WTC11 (cell line): ENCODE measurements at regions of chr5 and their contacts with region 1.

Region 1: GRCh38 chr5:173984218-173984617 is 4.8 kb upstream of the C5orf47 start:
- DNase-seq: no peak
- ATAC-seq: peak; percentile 82
- H3K4me3 Mint-ChIP-seq: no peak overlapping the region
- H3K27ac Mint-ChIP-seq: no peak overlapping the region
- H3K4me1 Mint-ChIP-seq: peaks cover 16% of the 10 kb centered on the region
- H3K27me3 Mint-ChIP-seq: no peaks in the 10 kb centered on the region
- CTCF ChIP-seq: peak; percentile 40; the same call in 1 of the 2 replicates

Region 2: GRCh38 chr5:173592050-173592669 is 392.1 kb before region 1 on chr5:
- CTCF ChIA-PET with region 1: interaction called, 15 read pairs
- POLR2A ChIA-PET with region 1: no interaction called
- DNase-seq: no peak
- ATAC-seq: no peak
- H3K4me3 Mint-ChIP-seq: no peak overlapping the region
- H3K27ac Mint-ChIP-seq: no peak overlapping the region
- H3K4me1 Mint-ChIP-seq: no peaks in the 10 kb centered on the region
- H3K27me3 Mint-ChIP-seq: peaks cover 13% of the 10 kb centered on the region
- CTCF ChIP-seq: peak; percentile 89

Region 3: GRCh38 chr5:173615884-173616576 is 368.2 kb before region 1 on chr5:
- CTCF ChIA-PET with region 1: interaction called, 11 read pairs
- POLR2A ChIA-PET with region 1: no interaction called
- DNase-seq: peak; percentile 64
- ATAC-seq: peak; percentile 29
- H3K4me3 Mint-ChIP-seq: peak overlapping the region; percentile 92
- H3K27ac Mint-ChIP-seq: peak overlapping the region; percentile 86
- H3K4me1 Mint-ChIP-seq: peaks cover 45% of the 10 kb centered on the region
- H3K27me3 Mint-ChIP-seq: no peaks in the 10 kb centered on the region
- CTCF ChIP-seq: no peak